ENCODE measurements at regions of chr19 and their contacts with region 1.

Region 1: DNA sequence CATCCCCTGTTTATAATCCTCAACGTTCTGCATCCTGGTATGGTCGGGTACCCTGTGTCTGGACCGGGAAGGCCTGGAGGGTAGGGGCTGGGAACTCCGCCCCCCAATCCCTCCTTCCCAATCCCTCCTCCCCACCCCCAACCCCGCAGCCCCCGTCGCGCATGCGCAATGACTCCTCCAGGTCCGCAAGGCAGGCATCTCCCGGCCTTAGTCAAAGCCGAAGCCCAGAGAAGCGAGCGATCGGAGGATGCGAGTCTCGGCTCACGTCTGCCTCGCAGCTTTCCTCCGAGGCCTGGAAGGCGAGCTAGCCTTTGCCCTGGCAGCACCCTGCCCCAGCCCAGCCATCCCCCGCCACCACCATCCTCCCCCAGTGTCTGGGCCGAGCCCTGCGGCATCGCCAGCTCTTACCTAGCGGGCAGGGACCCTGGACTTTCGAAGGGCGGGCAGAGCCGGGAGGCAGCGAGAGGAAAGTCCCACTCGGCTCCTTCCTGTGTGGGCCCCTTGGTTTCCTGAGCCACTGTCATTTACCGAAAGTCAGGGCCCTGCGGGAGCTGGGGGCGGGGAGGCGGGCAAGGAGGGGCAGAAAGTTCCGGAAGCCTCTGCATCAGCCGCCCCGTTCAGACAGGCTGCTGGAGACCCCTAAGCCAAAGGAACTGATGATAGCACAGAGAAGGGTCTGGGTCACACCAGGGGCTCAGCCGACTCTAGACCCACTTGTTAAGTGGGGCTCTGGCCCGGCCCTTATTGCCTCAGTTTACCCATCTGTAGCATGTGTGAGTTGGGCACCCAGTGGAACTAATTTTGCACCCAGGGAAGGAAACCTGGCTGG is at the start of gene JAK3:
- DNase-seq: no peak
- H3K4me3 ChIP-seq: peak within 1 kb of the TSS; percentile 35 to 72 (median 49)
- H3K27ac ChIP-seq: peak within 1 kb of the TSS; percentile 76 to 93
- H3K4me1 ChIP-seq: no peaks in the 10 kb centered on the region
- H3K27me3 ChIP-seq: peaks cover 0 to 2% of the 10 kb centered on the region in 2 donors
- CTCF ChIP-seq: no peak
- POLR2A ChIP-seq: no peak
- total RNA-seq, gene JAK3: 2.8 to 13.1 (median 3.5) TPM

Region 2: DNA sequence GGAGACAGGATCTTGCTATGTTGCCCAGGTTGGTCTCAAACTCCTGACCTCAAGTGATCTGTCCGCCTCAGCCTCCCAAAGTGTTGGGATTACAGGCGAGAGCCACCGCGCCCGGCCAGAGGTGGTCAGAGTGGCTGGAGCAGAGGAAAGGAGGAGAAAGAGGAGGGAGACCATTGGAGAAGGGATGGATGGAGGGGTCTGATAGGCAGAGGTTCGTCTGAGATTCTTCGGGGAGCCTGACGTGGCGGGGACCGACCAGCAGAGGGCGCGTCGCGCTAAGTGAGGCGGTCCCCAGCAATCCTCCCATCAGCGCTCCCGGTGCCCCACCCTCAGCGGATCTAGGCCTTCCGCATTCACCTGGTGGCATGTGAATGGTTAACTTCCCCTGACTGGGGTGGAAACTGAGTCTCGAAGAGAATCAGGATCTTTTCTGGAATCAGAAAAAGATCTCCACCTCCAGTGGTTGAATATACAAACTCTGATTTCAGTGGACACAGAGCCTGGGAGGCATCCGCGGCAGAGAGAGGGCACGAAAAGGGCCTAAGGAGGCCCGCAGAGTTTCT is 501.6 kb before region 1 on chr19:
- intact Hi-C with region 1: loop called (anchors 5 kb)
- DNase-seq: peak in 1 of 2 donors; percentile 75
- H3K4me3 ChIP-seq: no peak overlapping the region
- H3K27ac ChIP-seq: peak overlapping the region; percentile 26 to 27
- H3K4me1 ChIP-seq: no peaks in the 10 kb centered on the region
- H3K27me3 ChIP-seq: no peaks in the 10 kb centered on the region
- CTCF ChIP-seq: peak; percentile 93 to 95 (median 95)
- POLR2A ChIP-seq: no peak

Region 3: GRCh38 chr19:17824339-17824738 is 23.4 kb before region 1 on chr19:
- intact Hi-C with region 1: no loop called
- DNase-seq: no peak
- H3K4me3 ChIP-seq: no peak overlapping the region
- H3K27ac ChIP-seq: no peak overlapping the region
- H3K4me1 ChIP-seq: no peaks in the 10 kb centered on the region
- H3K27me3 ChIP-seq: no peaks in the 10 kb centered on the region
- CTCF ChIP-seq: no peak
- POLR2A ChIP-seq: no peak

Measured in breast epithelium (tissue), 4 donors.